GM18951 (cell line): ENCODE measurements at regions of chr3 and their contacts with region 1.

Region 1: GRCh38 chr3:168511428-168512014 is 415.8 kb upstream of the GOLIM4 start:
- POLR2A ChIP-seq: no peak

Region 2: GRCh38 chr3:168615493-168616020 is 104.0 kb after region 1 on chr3:
- in situ Hi-C with region 1: loop called (anchors 5 kb)
- POLR2A ChIP-seq: no peak

Region 3: DNA sequence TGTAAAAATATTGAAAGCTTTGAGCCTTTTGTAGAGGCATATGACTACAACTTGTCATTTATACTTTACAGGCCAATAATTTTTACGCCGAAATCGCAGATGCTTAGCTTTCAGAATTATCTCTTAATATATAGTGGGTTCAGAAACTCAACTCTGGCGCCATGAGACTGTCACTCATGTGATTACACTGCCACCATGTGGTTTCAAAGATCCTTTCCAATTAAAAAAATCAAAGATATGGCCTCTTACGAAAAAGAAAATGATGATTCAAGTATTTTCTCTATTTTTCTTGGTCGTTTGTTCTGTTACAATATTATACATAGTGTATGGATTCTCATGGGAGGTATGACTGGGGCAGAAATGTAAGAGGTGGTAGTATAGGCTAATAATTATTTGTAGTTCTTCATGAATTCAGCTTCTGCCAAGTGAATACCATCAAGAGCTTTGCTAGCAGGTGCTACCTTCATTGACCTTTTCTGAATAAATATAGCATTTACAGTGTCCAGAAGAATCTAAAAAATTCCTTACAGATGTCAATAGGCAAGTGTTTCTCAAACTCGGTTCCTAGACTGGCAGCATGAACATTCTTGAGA is 335.9 kb after region 1 on chr3:
- in situ Hi-C with region 1: loop called (anchors 25 kb)
- POLR2A ChIP-seq: no peak